ENCODE measurements at regions of chr6 and their contacts with region 1.

Region 1: GRCh38 chr6:125114248-125114858 is 39.2 kb upstream of the TPD52L1 start:
- DNase-seq: peak in 5 of 9 experiments; percentile 24 to 55 (median 27)
- ATAC-seq: no peak
- H3K4me3 ChIP-seq: no peak overlapping the region
- H3K4me3 Mint-ChIP-seq: no peak overlapping the region
- H3K27ac ChIP-seq: no peak overlapping the region
- H3K27ac Mint-ChIP-seq: no peak overlapping the region
- H3K4me1 ChIP-seq: no peaks in the 10 kb centered on the region
- H3K4me1 Mint-ChIP-seq: no peaks in the 10 kb centered on the region
- H3K27me3 ChIP-seq: no peaks in the 10 kb centered on the region
- H3K27me3 Mint-ChIP-seq: peaks cover under 1% of the 10 kb centered on the region
- CTCF ChIP-seq: peak; percentile 72

Region 2: DNA sequence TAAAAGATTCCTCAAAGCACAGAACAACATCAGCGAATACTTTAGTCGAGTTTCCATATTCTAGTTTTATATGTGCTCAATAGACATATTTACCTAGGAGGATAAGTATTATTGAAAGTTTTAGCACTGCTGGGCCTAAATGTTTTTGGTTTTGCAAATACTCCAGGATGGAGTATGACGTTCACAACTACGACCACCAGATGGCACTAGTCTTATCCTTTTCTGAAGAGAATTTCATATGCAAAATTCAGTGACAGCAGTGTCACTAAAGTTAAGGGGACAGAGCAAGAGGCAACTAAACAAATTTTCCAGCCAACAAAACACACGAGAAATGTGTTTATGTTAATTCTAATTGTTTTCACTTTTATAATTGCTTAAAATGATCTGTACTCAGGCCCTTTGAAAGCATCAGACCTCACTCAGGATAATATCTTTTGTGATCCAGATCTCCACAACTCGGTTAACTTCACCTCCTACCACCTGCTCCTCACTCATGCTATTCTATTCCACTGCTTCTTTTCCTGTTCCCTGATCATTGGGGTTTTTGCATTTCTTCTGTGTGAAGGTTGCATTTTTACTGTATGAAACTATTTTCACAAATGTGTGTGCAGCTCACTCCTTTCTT is 1698.4 kb before region 1 on chr6:
- CTCF ChIA-PET with region 1: no interaction called
- POLR2A ChIA-PET with region 1: no interaction called
- intact Hi-C with region 1: loop called in 1 of 2 experiments (anchors 2 kb)
- DNase-seq: peak in 4 of 9 experiments; percentile 4 to 38 (median 20)
- ATAC-seq: peak; percentile 38
- H3K4me3 ChIP-seq: no peak overlapping the region
- H3K4me3 Mint-ChIP-seq: no peak overlapping the region
- H3K27ac ChIP-seq: no peak overlapping the region
- H3K27ac Mint-ChIP-seq: no peak overlapping the region
- H3K4me1 ChIP-seq: no peaks in the 10 kb centered on the region
- H3K4me1 Mint-ChIP-seq: no peaks in the 10 kb centered on the region
- H3K27me3 ChIP-seq: no peaks in the 10 kb centered on the region
- H3K27me3 Mint-ChIP-seq: no peaks in the 10 kb centered on the region
- CTCF ChIP-seq: peak; percentile 47

Region 3: GRCh38 chr6:123802697-123803496 is 1311.5 kb before region 1 on chr6:
- CTCF ChIA-PET with region 1: interaction called, 5 read pairs
- POLR2A ChIA-PET with region 1: no interaction called
- intact Hi-C with region 1: loop called (anchors 2 to 5 kb)
- DNase-seq: peak; percentile 8 to 54 (median 27)
- ATAC-seq: peak; percentile 42
- H3K4me3 ChIP-seq: no peak overlapping the region
- H3K4me3 Mint-ChIP-seq: peak overlapping the region; percentile 53
- H3K27ac ChIP-seq: no peak overlapping the region
- H3K27ac Mint-ChIP-seq: no peak overlapping the region
- H3K4me1 ChIP-seq: peaks cover 7% of the 10 kb centered on the region
- H3K4me1 Mint-ChIP-seq: peaks cover 13% of the 10 kb centered on the region
- H3K27me3 ChIP-seq: peaks cover 0 to 4% of the 10 kb centered on the region in 2 experiments
- H3K27me3 Mint-ChIP-seq: peaks cover 40% of the 10 kb centered on the region
- CTCF ChIP-seq: peak; percentile 28

Region 4: GRCh38 chr6:124633660-124634059 is 480.7 kb before region 1 on chr6:
- CTCF ChIA-PET with region 1: no interaction called
- POLR2A ChIA-PET with region 1: no interaction called
- intact Hi-C with region 1: no loop called
- DNase-seq: no peak
- ATAC-seq: no peak
- H3K4me3 ChIP-seq: no peak overlapping the region
- H3K4me3 Mint-ChIP-seq: no peak overlapping the region
- H3K27ac ChIP-seq: no peak overlapping the region
- H3K27ac Mint-ChIP-seq: no peak overlapping the region
- H3K4me1 ChIP-seq: no peaks in the 10 kb centered on the region
- H3K4me1 Mint-ChIP-seq: no peaks in the 10 kb centered on the region
- H3K27me3 ChIP-seq: no peaks in the 10 kb centered on the region
- H3K27me3 Mint-ChIP-seq: no peaks in the 10 kb centered on the region
- CTCF ChIP-seq: no peak

Region 5: GRCh38 chr6:124870611-124871459 is 243.5 kb before region 1 on chr6:
- CTCF ChIA-PET with region 1: interaction called, 23 read pairs
- POLR2A ChIA-PET with region 1: no interaction called
- intact Hi-C with region 1: loop called (anchors 2 to 5 kb)
- DNase-seq: peak in 1 of 9 experiments; percentile 14
- ATAC-seq: no peak
- H3K4me3 ChIP-seq: no peak overlapping the region
- H3K4me3 Mint-ChIP-seq: no peak overlapping the region
- H3K27ac ChIP-seq: no peak overlapping the region
- H3K27ac Mint-ChIP-seq: no peak overlapping the region
- H3K4me1 ChIP-seq: no peaks in the 10 kb centered on the region
- H3K4me1 Mint-ChIP-seq: no peaks in the 10 kb centered on the region
- H3K27me3 ChIP-seq: no peaks in the 10 kb centered on the region
- H3K27me3 Mint-ChIP-seq: no peaks in the 10 kb centered on the region
- CTCF ChIP-seq: no peak

Region 6: DNA sequence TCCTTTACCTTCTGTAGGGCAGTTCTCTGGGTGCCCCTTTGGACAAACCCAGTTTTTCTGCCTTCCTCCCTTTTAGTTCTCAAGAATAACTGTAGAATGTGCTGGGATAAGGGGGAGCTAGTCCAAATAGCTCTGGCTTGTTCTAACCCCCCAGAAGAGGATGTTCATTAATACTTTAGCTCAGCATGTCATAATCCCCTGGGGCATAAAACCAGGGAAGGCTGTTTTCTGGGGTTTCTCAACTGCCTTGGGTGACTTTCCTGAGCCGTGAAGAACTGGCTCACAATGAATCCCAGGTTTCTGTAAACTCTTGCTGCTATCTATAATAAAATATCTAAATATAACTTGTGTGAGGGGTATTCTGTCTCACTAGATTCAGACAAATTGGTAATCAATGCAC is 196.6 kb before region 1 on chr6:
- CTCF ChIA-PET with region 1: no interaction called
- POLR2A ChIA-PET with region 1: no interaction called
- intact Hi-C with region 1: no loop called
- DNase-seq: no peak
- ATAC-seq: no peak
- H3K4me3 ChIP-seq: no peak overlapping the region
- H3K4me3 Mint-ChIP-seq: no peak overlapping the region
- H3K27ac ChIP-seq: no peak overlapping the region
- H3K27ac Mint-ChIP-seq: no peak overlapping the region
- H3K4me1 ChIP-seq: no peaks in the 10 kb centered on the region
- H3K4me1 Mint-ChIP-seq: no peaks in the 10 kb centered on the region
- H3K27me3 ChIP-seq: no peaks in the 10 kb centered on the region
- H3K27me3 Mint-ChIP-seq: peaks cover 3% of the 10 kb centered on the region
- CTCF ChIP-seq: no peak

Region 7: GRCh38 chr6:125077444-125077843 is 36.9 kb before region 1 on chr6:
- CTCF ChIA-PET with region 1: no interaction called
- POLR2A ChIA-PET with region 1: no interaction called
- intact Hi-C with region 1: no loop called
- DNase-seq: no peak
- ATAC-seq: no peak
- H3K4me3 ChIP-seq: no peak overlapping the region
- H3K4me3 Mint-ChIP-seq: no peak overlapping the region
- H3K27ac ChIP-seq: no peak overlapping the region
- H3K27ac Mint-ChIP-seq: no peak overlapping the region
- H3K4me1 ChIP-seq: no peaks in the 10 kb centered on the region
- H3K4me1 Mint-ChIP-seq: no peaks in the 10 kb centered on the region
- H3K27me3 ChIP-seq: no peaks in the 10 kb centered on the region
- H3K27me3 Mint-ChIP-seq: no peaks in the 10 kb centered on the region
- CTCF ChIP-seq: no peak

Region 8: GRCh38 chr6:126539022-126539421 is 1424.7 kb after region 1 on chr6:
- CTCF ChIA-PET with region 1: no interaction called
- POLR2A ChIA-PET with region 1: no interaction called
- intact Hi-C with region 1: no loop called
- DNase-seq: no peak
- ATAC-seq: no peak
- H3K4me3 ChIP-seq: no peak overlapping the region
- H3K4me3 Mint-ChIP-seq: no peak overlapping the region
- H3K27ac ChIP-seq: no peak overlapping the region
- H3K27ac Mint-ChIP-seq: no peak overlapping the region
- H3K4me1 ChIP-seq: no peaks in the 10 kb centered on the region
- H3K4me1 Mint-ChIP-seq: no peaks in the 10 kb centered on the region
- H3K27me3 ChIP-seq: no peaks in the 10 kb centered on the region
- H3K27me3 Mint-ChIP-seq: no peaks in the 10 kb centered on the region
- CTCF ChIP-seq: no peak